H1 (cell line): ENCODE measurements at regions of chr3 and their contacts with region 1.

Region 1: GRCh38 chr3:36933540-36934296 is 11.1 kb downstream of the TRANK1 start:
- DNase-seq: no peak
- H3K4me3 ChIP-seq: no peak overlapping the region
- H3K27ac ChIP-seq: peak overlapping the region; percentile 87
- H3K4me1 ChIP-seq: peaks cover 3 to 12% (median 9%) of the 10 kb centered on the region in 4 experiments; a peak in 6 of 7 replicates
- H3K27me3 ChIP-seq: no peaks in the 10 kb centered on the region
- CTCF ChIP-seq: no peak
- EP300 ChIP-seq: no peak
- POLR2A ChIP-seq: no peak
- RAD21 ChIP-seq: no peak

Region 2: DNA sequence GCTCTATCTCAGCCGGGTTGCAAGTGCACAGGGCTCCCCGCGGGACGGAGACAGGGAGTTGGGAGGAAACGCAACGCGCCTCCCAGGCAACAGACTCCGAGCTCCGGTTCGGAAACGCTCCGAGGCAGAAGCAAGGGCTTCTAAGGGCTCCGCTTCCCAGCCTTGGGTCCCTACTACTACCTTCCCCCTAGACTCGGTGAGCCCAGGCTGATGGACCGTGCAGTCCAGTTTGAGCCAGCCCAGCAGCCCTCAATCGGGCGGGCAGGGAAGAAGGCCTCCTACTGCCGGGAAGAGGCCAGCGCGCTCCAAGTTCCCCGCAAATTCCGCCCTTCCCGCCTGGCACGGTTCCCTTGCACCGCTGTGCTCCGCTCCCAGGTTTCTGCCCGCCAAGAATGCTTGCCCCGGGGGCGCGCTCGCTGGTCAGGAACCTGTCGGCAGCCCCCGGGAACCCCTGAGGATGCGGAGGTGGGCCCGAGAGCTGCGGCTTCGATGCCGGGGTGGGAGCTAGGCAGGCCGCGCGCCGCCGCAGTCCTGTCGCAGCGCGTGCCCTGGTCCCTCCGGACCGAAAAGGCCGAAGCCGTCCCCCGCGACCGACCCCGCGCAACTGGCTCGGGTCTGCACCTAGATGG is 10.4 kb after region 1 on chr3:
- CTCF ChIA-PET with region 1: interaction called, 6 read pairs
- POLR2A ChIA-PET with region 1: interaction called, 34 read pairs
- DNase-seq: no peak
- H3K4me3 ChIP-seq: peak overlapping the region; percentile 53 to 64 (median 59)
- H3K27ac ChIP-seq: no peak overlapping the region
- H3K4me1 ChIP-seq: peaks cover 0 to 10% (median 1%) of the 10 kb centered on the region in 4 experiments; a peak in 4 of 7 replicates
- H3K27me3 ChIP-seq: peaks cover 4 to 28% (median 19%) of the 10 kb centered on the region in 4 experiments
- CTCF ChIP-seq: peak in 1 of 3 experiments; percentile 1; a peak in 1 of 4 replicates
- EP300 ChIP-seq: no peak
- POLR2A ChIP-seq: peak in 1 of 2 experiments; percentile 13; a peak in 1 of 3 replicates
- RAD21 ChIP-seq: no peak